CD4-positive, alpha-beta T cell (primary cell): ENCODE measurements at regions of chr6 and their contacts with region 1.

Region 1: DNA sequence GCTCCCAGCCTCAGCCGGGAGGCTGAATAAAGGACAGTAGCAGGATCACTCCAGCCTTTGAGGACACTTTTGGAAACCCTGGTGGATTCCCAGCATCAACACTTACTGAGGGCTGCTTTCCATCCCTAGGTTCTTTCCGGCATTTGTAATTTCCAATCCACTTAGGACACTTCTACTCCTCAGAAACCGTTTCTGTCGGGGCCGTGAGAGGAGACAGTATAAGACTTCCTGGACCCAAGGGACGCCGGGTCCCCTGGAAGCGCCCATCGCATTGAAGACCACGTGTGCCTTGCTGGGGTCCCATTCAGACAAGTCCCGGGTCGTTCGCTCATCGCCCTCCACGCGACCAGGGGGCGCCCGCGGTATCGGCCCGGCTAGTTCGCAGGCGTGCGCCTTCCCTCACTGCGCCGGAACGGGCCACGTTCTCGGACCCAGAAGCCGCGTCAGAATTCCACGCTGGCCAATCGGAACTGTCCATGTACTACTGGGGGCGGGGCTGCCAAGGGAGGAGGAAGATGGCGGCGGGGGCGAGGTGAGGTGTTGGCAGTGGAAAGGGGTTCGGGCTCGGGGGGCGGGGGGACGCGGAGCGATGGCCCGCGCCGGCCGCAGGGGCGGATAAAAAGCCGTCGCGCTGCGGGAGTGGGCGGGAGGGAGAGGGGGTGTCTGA is at the start of gene NUS1:
- DNase-seq: peak; percentile 95 to 99 (median 98)
- ATAC-seq: peak; percentile 96
- H3K4me3 ChIP-seq: peak within 1 kb of the TSS; percentile 69
- H3K4me3 Mint-ChIP-seq: peak within 1 kb of the TSS; percentile 99
- H3K27ac ChIP-seq: peak within 1 kb of the TSS; percentile 44 to 53
- H3K27ac Mint-ChIP-seq: peak within 1 kb of the TSS; percentile 96
- H3K4me1 ChIP-seq: peaks cover 29% of the 10 kb centered on the region
- H3K4me1 Mint-ChIP-seq: peaks cover 56% of the 10 kb centered on the region
- H3K27me3 ChIP-seq: no peaks in the 10 kb centered on the region
- H3K27me3 Mint-ChIP-seq: no peaks in the 10 kb centered on the region
- CTCF ChIP-seq: peak; percentile 86
- total RNA-seq, gene NUS1: 16.2 to 16.6 TPM

Region 2: DNA sequence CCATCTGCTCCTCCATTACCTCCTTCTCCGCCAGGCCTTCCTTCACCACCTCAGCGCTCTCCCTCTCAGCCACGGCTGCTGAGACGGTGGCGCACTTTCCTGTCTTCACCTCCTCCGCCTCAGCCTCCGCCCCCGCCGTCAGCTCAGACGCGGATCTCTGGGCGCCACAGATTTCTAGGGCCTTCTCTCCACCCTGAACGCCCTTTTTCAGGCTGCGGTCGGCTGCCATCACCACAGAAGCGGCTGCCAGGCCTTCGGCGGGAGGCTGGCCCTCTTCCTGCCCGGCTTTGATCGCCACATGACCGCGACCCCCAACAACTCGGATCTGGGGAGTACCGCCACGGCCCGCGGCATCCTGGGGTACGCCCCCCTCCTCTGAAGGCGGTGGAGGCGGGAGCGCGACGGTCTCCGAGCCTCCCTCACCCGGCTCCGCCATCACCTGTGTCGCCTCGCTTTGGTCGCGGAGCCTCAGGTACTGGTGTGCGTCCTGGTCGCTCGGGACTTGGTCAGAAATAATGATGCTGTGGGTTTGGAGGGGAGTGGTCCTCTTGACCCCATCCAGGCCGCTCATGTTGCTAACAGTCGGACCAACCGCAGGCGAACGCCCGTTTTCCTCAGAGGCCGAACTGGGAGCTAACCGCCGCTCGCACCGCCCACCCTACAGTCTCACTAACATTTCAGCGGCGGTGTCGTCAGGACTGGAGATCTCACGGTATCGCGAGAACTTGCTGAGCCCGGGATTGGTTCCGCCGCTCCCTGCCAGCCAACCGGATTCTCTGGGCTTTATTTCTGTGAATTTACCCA is 1395.7 kb before region 1 on chr6 and contains the start of gene TSPYL1:
- CTCF ChIA-PET with region 1: no interaction called
- POLR2A ChIA-PET with region 1: no interaction called
- intact Hi-C with region 1: loop called in 1 of 2 experiments (anchors 10 kb)
- DNase-seq: peak; percentile 89 to 98 (median 92)
- ATAC-seq: peak; percentile 84
- H3K4me3 ChIP-seq: peak within 1 kb of the TSS; percentile 76
- H3K4me3 Mint-ChIP-seq: peak within 1 kb of the TSS; percentile 96
- H3K27ac ChIP-seq: peak within 1 kb of the TSS; percentile 97 to 99
- H3K27ac Mint-ChIP-seq: peak within 1 kb of the TSS; percentile 95
- H3K4me1 ChIP-seq: peaks cover 41% of the 10 kb centered on the region
- H3K4me1 Mint-ChIP-seq: peaks cover 69% of the 10 kb centered on the region
- H3K27me3 ChIP-seq: no peaks in the 10 kb centered on the region
- H3K27me3 Mint-ChIP-seq: no peaks in the 10 kb centered on the region
- CTCF ChIP-seq: no peak
- total RNA-seq, gene TSPYL1: 225 to 226 TPM

Region 3: DNA sequence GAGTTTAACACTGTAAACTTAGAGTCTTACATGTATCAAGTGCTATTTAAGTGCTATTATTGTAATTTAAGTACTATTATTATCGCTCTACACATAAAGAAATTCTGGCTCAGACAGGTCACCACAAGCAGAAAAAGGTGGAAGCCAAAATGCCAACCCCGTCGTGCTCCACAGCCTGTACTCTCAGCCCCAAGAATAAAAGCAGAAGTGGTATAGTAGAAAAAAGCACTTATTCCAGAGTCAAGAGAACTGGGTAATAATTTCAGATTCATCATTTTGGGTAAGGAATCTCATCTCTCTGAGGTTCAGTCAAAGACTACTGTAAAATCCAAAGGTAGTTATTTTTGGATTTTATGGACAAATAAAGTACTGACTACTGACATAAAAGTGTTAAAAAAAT is 1007.5 kb before region 1 on chr6:
- CTCF ChIA-PET with region 1: no interaction called
- POLR2A ChIA-PET with region 1: no interaction called
- intact Hi-C with region 1: loop called in 1 of 2 experiments (anchors 5 kb)
- DNase-seq: peak in 1 of 14 experiments; percentile 22
- ATAC-seq: no peak
- H3K4me3 ChIP-seq: peak overlapping the region; percentile 74
- H3K4me3 Mint-ChIP-seq: peak overlapping the region; percentile 97
- H3K27ac ChIP-seq: no peak overlapping the region
- H3K27ac Mint-ChIP-seq: peak overlapping the region; percentile 96
- H3K4me1 ChIP-seq: peaks cover 21% of the 10 kb centered on the region
- H3K4me1 Mint-ChIP-seq: peaks cover 50% of the 10 kb centered on the region
- H3K27me3 ChIP-seq: no peaks in the 10 kb centered on the region
- H3K27me3 Mint-ChIP-seq: no peaks in the 10 kb centered on the region
- CTCF ChIP-seq: no peak

Region 4: DNA sequence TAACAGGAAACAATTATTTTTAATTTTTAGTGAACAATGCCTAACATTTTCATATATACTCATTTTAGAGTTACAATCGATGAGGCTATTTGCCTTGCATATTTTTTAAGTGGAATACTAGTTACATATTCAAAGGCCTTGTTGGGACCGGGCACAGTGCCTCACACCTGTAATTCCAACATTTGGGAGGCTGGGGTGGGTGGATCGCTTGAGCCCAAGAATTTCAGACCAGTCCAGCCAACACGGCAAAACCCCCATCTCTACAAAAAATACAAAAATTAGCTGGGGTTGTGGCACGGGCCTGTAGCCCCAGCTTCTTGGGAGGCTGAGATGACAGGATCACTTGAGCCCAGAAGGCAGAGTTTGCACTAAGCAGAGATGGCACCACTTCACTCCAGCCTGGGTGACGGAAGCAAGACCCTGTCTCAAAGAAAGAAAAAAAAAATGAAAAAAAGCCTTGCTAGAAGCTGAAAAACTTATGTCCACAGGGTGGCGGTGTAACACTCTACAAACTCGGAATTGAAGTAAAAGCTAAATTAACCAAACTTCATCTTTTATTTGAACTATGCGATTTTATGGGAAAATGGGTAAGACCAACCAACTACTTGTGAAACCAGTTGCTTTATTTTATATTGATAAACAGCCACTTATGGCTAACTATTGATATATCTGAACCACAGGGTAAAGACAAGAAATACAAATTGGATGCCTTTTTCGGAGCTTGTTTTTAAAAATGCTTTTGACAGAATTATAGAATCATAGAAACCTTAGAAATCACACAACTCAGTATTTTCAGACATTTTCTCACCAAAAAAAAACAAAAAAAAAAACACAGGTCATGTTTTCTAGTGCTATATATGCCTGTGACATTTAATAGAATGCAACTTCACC is 225.3 kb before region 1 on chr6:
- CTCF ChIA-PET with region 1: no interaction called
- POLR2A ChIA-PET with region 1: no interaction called
- intact Hi-C with region 1: loop called in 1 of 2 experiments (anchors 5 kb)
- DNase-seq: peak; percentile 13 to 82 (median 50)
- ATAC-seq: peak; percentile 52
- H3K4me3 ChIP-seq: no peak overlapping the region
- H3K4me3 Mint-ChIP-seq: no peak overlapping the region
- H3K27ac ChIP-seq: no peak overlapping the region
- H3K27ac Mint-ChIP-seq: no peak overlapping the region
- H3K4me1 ChIP-seq: no peaks in the 10 kb centered on the region
- H3K4me1 Mint-ChIP-seq: no peaks in the 10 kb centered on the region
- H3K27me3 ChIP-seq: peaks cover 0 to 28% of the 10 kb centered on the region in 2 experiments
- H3K27me3 Mint-ChIP-seq: peaks cover 54% of the 10 kb centered on the region
- CTCF ChIP-seq: peak; percentile 78

Region 5: GRCh38 chr6:118551063-118552053 is 876.2 kb after region 1 on chr6:
- CTCF ChIA-PET with region 1: no interaction called
- POLR2A ChIA-PET with region 1: no interaction called
- intact Hi-C with region 1: loop called in 1 of 2 experiments (anchors 10 kb)
- DNase-seq: peak in 4 of 14 experiments; percentile 42 to 70 (median 61)
- ATAC-seq: peak; percentile 96
- H3K4me3 ChIP-seq: no peak overlapping the region
- H3K4me3 Mint-ChIP-seq: no peak overlapping the region
- H3K27ac ChIP-seq: no peak overlapping the region
- H3K27ac Mint-ChIP-seq: peak overlapping the region; percentile 13
- H3K4me1 ChIP-seq: no peaks in the 10 kb centered on the region
- H3K4me1 Mint-ChIP-seq: peaks cover 56% of the 10 kb centered on the region
- H3K27me3 ChIP-seq: no peaks in the 10 kb centered on the region
- H3K27me3 Mint-ChIP-seq: no peaks in the 10 kb centered on the region
- CTCF ChIP-seq: peak; percentile 63

Region 6: GRCh38 chr6:119078376-119079282 is 1403.5 kb after region 1 on chr6 and contains the start of gene FAM184A:
- CTCF ChIA-PET with region 1: no interaction called
- POLR2A ChIA-PET with region 1: no interaction called
- intact Hi-C with region 1: loop called in 1 of 2 experiments (anchors 10 kb)
- DNase-seq: peak; percentile 51 to 92 (median 71)
- ATAC-seq: peak; percentile 75
- H3K4me3 ChIP-seq: peak within 1 kb of the TSS; percentile 65
- H3K4me3 Mint-ChIP-seq: peak within 1 kb of the TSS; percentile 91
- H3K27ac ChIP-seq: peak within 1 kb of the TSS; percentile 53 to 58
- H3K27ac Mint-ChIP-seq: peak within 1 kb of the TSS; percentile 90
- H3K4me1 ChIP-seq: peaks cover 25% of the 10 kb centered on the region
- H3K4me1 Mint-ChIP-seq: peaks cover 40% of the 10 kb centered on the region
- H3K27me3 ChIP-seq: no peaks in the 10 kb centered on the region
- H3K27me3 Mint-ChIP-seq: no peaks in the 10 kb centered on the region
- CTCF ChIP-seq: no peak
- total RNA-seq, gene FAM184A: 2.9 to 3.3 TPM